Sciatic nerve (tissue), 2 donors: ENCODE measurements at regions of chr5 and their contacts with region 1.

Region 1: GRCh38 chr5:65481635-65482295 is at the start of gene ADAMTS6:
- DNase-seq: peak; percentile 93
- ATAC-seq: peak; percentile 97
- total RNA-seq, gene ADAMTS6: 3.8 TPM

Region 2: DNA sequence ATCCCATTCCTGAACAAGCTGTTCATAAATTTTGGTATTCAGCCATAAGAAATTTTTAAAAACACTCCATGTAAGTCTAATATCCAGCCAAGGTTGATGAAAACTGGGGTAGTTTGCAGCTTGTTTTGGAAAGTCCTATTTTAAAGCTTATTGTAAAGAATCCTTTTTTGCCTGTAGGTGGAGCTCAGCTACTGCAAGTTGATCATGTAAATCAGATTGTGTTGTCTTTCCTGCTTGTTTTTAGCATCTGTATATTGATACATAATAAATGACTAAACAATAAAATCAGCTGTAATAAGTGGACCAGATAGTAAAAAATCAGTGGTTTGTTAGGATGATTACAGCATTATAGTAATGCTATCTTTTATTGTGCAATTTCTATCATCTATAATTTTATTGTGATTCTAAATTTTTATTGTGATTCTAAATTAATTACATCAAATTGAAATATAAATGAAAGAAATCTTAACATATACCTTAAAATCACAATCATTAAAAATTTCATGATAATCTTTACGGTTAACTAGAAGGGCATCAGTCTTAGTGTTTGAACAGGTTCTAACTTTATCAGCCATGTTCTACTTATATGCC is 670.6 kb before region 1 on chr5:
- intact Hi-C with region 1: loop called (anchors 10 kb)
- DNase-seq: no peak
- ATAC-seq: peak; percentile 57

Region 3: GRCh38 chr5:65364907-65365306 is 116.9 kb before region 1 on chr5:
- intact Hi-C with region 1: no loop called
- DNase-seq: no peak
- ATAC-seq: peak; percentile 25

Region 4: DNA sequence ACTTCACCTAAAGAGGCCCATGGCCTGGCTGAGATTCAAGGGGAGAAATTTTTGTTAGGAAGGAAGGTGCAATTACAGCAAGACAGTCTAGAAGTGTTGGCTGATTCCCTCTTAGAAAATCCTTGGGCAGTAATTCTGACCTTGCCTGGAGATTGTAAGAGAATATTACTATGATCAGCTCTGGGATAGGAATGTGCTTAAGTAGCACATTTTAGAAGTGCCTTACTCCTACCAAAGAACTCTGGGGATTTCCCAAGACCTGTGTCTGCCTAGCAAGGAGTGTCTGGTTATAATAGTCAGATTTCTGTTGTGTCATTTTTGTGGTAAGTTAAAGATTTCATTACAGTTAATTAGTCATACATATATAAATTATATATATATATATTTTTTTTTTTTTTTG is 292.6 kb after region 1 on chr5:
- intact Hi-C with region 1: no loop called
- DNase-seq: no peak
- ATAC-seq: no peak

Region 5: GRCh38 chr5:66021585-66021984 is 539.8 kb after region 1 on chr5:
- intact Hi-C with region 1: no loop called
- DNase-seq: no peak
- ATAC-seq: no peak